ENCODE measurements at regions of chr17 and their contacts with region 1.

Region 1: GRCh38 chr17:28598799-28599310 is at the start of gene SPAG5:
- DNase-seq: peak; percentile 57
- ATAC-seq: peak; percentile 97
- H3K4me3 ChIP-seq: peak within 1 kb of the TSS; percentile 82 to 83
- H3K27ac ChIP-seq: peak within 1 kb of the TSS; percentile 95
- H3K4me1 ChIP-seq: peaks cover 10% of the 10 kb centered on the region
- H3K27me3 ChIP-seq: no peaks in the 10 kb centered on the region
- CTCF ChIP-seq: no peak
- total RNA-seq, gene SPAG5: 152 TPM

Region 2: GRCh38 chr17:28547026-28547622 is 51.7 kb before region 1 on chr17:
- CTCF ChIA-PET with region 1: interaction called, 13 read pairs
- POLR2A ChIA-PET with region 1: no interaction called
- in situ Hi-C with region 1: no loop called
- intact Hi-C with region 1: no loop called
- DNase-seq: no peak
- ATAC-seq: no peak
- H3K4me3 ChIP-seq: no peak overlapping the region
- H3K27ac ChIP-seq: no peak overlapping the region
- H3K4me1 ChIP-seq: 0 out of 2 replicates have a peak, but pooled peaks cover 6% of the 10 kb centered on the region
- H3K27me3 ChIP-seq: no peaks in the 10 kb centered on the region
- CTCF ChIP-seq: no peak

Region 3: GRCh38 chr17:28582513-28582912 is 16.3 kb before region 1 on chr17:
- CTCF ChIA-PET with region 1: no interaction called
- POLR2A ChIA-PET with region 1: no interaction called
- in situ Hi-C with region 1: no loop called
- intact Hi-C with region 1: no loop called
- DNase-seq: no peak
- ATAC-seq: no peak
- H3K4me3 ChIP-seq: no peak overlapping the region
- H3K27ac ChIP-seq: no peak overlapping the region
- H3K4me1 ChIP-seq: no peaks in the 10 kb centered on the region
- H3K27me3 ChIP-seq: no peaks in the 10 kb centered on the region
- CTCF ChIP-seq: no peak

Measured in Panc1 (cell line).